ENCODE measurements at regions of chr2 and their contacts with region 1.

Region 1: DNA sequence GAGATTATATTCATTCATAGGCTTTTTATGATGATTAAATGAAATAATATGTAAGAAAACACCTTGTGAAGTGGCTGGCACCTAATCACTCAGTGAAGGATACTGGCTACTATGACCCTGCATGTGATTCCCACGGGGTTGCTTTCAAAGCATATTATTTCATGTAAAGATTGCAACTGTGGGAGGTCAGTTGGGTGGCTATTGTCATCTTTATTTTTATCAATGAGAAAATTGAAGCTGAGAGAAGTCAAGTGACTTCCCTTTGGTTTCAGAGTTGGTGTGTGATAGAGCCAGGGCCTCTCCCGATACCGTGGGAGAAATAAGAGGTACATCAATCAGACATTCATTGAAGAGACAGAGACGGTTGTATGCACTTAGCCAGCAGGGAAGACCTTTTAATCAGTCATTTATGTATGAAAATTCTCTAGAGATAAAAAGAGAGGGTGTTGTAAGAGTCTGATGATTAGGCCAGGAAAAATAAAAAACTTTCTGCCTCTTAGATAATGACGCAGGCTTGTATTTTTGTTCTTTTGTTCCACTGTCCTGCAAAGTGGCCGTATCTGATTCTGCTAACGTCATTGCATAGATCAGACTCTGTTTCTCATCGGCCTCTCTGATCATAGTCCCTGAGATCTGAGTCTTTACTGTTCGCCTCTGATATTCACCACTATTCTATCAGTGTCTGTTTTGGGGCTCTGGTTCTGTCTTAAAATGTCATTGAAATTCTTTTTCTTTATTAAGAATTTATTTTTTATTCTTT is 50.5 kb downstream of the QPCT start:
- DNase-seq: no peak
- H3K4me3 ChIP-seq: no peak overlapping the region
- H3K27ac ChIP-seq: no peak overlapping the region
- H3K4me1 ChIP-seq: no peaks in the 10 kb centered on the region
- H3K27me3 ChIP-seq: no peaks in the 10 kb centered on the region
- CTCF ChIP-seq: no peak
- POLR2A ChIP-seq: no peak

Region 2: GRCh38 chr2:37561615-37562569 is 166.9 kb after region 1 on chr2:
- intact Hi-C with region 1: no loop called
- DNase-seq: peak; percentile 62
- H3K4me3 ChIP-seq: no peak overlapping the region
- H3K27ac ChIP-seq: peak overlapping the region in 1 of 2 donors; percentile 4
- H3K4me1 ChIP-seq: peaks cover 13% of the 10 kb centered on the region
- H3K27me3 ChIP-seq: no peaks in the 10 kb centered on the region
- CTCF ChIP-seq: no peak
- POLR2A ChIP-seq: no peak

Region 3: DNA sequence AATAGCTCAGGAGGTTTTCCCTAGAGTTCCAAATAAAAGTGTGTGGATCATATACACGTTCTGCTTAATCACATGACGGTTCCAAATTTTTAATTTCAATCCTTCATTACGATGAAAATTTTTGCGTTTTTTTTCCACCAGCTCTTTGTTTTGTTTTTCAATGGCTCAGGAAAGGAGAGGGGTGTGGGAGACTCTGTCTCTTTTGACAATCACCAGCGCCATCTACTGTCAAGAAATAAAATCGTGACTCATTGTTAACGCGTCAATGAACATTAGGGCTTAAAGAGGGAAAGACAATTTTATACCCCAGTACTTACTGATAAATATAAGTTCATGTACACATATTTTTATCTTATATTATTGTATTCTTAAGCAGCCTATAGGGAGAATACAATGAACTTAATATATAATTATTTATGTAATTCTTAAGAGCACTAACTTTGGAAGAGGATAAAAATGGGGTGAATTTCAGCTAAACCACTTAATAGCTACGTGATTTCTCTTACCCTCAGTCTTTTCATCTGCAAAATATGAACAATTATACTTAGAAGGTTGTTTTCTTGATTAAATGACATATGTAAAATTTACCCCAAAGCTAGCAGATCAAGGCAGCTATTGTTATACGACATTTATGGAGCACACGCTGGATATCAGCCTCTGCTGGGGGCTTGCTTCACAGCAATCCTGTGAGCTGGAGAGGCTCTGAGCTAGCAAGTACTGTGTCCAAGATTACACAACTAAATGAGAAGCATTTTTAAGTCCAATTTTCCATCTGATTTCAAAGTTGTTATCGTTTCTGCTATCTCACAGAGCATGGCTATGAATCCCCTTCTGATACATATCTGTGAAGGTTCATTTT is 482.7 kb after region 1 on chr2:
- intact Hi-C with region 1: loop called (anchors 5 kb)
- DNase-seq: peak; percentile 24
- H3K4me3 ChIP-seq: no peak overlapping the region
- H3K27ac ChIP-seq: no peak overlapping the region
- H3K4me1 ChIP-seq: peaks cover 8% of the 10 kb centered on the region
- H3K27me3 ChIP-seq: no peaks in the 10 kb centered on the region
- CTCF ChIP-seq: peak; percentile 77 to 80 (median 78)
- POLR2A ChIP-seq: no peak